BJ (cell line): ENCODE measurements at regions of chr11 and their contacts with region 1.

Region 1: DNA sequence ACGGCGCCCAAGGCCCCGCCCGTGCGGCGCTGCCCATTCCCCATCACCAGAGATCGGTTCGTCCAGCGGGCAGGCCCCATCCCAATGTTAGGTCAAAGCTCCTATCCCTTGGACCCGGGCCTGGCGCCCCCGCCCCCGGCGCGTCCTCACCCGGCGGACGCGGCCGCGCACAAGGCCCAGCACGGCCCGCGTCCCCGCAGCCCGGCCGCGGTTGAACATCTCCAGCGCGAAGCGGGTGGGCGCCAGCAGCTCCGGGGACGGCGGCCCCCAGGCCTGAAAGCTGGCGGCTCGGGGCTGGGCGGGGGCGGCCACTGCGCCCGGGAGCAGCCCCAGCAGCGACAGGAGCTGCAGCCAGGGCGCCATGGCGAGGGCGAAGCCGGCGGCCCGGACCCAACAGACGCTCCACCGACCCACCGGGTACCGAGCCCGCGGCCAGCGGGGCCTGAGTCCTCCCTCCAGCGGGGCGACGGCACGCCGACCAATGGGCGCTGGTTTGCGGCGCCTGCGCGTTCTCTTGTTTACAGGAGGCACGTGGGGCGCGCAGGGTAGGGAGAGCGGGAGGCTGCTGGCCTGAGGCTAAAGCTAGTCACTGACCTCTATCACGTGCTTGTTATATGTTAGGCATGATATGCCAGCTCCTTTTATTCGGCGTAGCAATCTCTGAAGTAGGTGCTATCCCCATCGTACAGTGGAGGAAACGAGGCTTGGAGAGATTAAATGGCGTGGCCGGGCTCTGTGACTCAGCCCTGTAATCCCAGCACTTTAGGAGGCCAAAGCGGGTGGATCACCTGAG is at the start of gene CTSF:
- DNase-seq: no peak
- H3K4me3 ChIP-seq: peak within 1 kb of the TSS; percentile 45
- H3K27me3 ChIP-seq: no peaks in the 10 kb centered on the region
- CTCF ChIP-seq: no peak
- polyA plus RNA-seq, gene CTSF: 30.4 and 44.0 TPM in 2 replicates

Region 2: GRCh38 chr11:66579017-66579606 is 10.8 kb after region 1 on chr11:
- CTCF ChIA-PET with region 1: interaction called, 11 read pairs
- POLR2A ChIA-PET with region 1: no interaction called
- DNase-seq: no peak
- H3K4me3 ChIP-seq: no peak overlapping the region
- H3K27me3 ChIP-seq: peaks cover 2% of the 10 kb centered on the region; the same call in 1 of the 2 replicates
- CTCF ChIP-seq: peak; percentile 86